ENCODE measurements at regions of chr7 and their contacts with region 1.

Region 1: GRCh38 chr7:30988351-30989000 is 24.7 kb downstream of the GHRHR start:
- DNase-seq: no peak
- CTCF ChIP-seq: no peak

Region 2: GRCh38 chr7:30974605-30975255 is 13.7 kb before region 1 on chr7:
- CTCF ChIA-PET with region 1: interaction called, 63 read pairs
- POLR2A ChIA-PET with region 1: no interaction called
- DNase-seq: peak; percentile 91
- CTCF ChIP-seq: peak; percentile 76